PC-3 (cell line): ENCODE measurements at regions of chr3 and their contacts with region 1.

Region 1: GRCh38 chr3:94794288-94794941 is 731.6 kb downstream of the NSUN3 start:
- DNase-seq: peak; percentile 16
- ATAC-seq: no peak
- H3K4me3 ChIP-seq: no peak overlapping the region
- H3K27ac ChIP-seq: no peak overlapping the region
- H3K4me1 ChIP-seq: peaks cover 5% of the 10 kb centered on the region
- H3K27me3 ChIP-seq: no peaks in the 10 kb centered on the region
- CTCF ChIP-seq: no peak

Region 2: DNA sequence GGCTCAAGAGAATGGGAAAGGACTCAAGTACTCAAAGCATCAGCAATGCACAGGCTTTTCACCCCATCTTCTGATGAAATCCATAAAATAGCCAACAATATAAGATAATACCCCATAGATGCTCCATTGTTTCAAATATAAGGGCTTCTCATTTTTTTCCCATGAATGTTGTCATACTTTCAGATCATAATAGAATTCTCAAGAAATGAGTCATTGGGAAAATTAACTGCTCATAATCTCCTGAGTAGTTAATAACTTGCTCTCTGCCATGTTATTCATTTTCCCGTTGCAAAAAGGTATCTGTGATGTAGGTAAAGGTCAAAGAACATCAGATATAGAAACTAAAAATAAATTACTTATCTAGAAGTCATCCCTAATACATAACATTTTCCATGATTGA is 609.6 kb before region 1 on chr3:
- CTCF ChIA-PET with region 1: no interaction called
- POLR2A ChIA-PET with region 1: no interaction called
- intact Hi-C with region 1: no loop called
- DNase-seq: peak; percentile 71
- ATAC-seq: peak; percentile 44
- H3K4me3 ChIP-seq: no peak overlapping the region
- H3K27ac ChIP-seq: peak overlapping the region; percentile 40
- H3K4me1 ChIP-seq: peaks cover 21% of the 10 kb centered on the region
- H3K27me3 ChIP-seq: no peaks in the 10 kb centered on the region
- CTCF ChIP-seq: no peak

Region 3: GRCh38 chr3:94345101-94345500 is 449.3 kb before region 1 on chr3:
- CTCF ChIA-PET with region 1: no interaction called
- POLR2A ChIA-PET with region 1: no interaction called
- intact Hi-C with region 1: loop called (anchors 2 kb)
- DNase-seq: no peak
- ATAC-seq: no peak
- H3K4me3 ChIP-seq: no peak overlapping the region
- H3K27ac ChIP-seq: no peak overlapping the region
- H3K4me1 ChIP-seq: no peaks in the 10 kb centered on the region
- H3K27me3 ChIP-seq: no peaks in the 10 kb centered on the region
- CTCF ChIP-seq: no peak

Region 4: DNA sequence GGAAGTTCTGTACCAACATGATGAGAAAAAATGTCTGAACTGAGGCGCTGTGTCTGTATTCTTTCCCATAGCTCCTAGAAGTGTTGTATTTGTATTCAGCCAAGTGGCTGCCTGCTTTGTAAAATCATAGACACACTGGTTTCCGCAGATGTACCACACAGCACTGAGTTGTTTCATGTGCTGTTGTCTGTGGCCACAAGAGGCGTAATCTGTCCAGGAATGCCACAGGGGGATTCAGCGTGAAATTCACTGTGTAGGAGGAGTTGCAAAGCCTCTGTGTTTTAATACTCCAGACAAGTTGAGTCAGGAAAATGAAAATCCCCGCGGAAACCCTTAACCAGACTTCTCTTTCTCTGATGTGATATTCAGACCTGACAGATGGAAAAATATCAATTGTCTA is 269.4 kb before region 1 on chr3:
- CTCF ChIA-PET with region 1: no interaction called
- POLR2A ChIA-PET with region 1: no interaction called
- intact Hi-C with region 1: loop called (anchors 10 kb)
- DNase-seq: peak; percentile 51
- ATAC-seq: peak; percentile 95
- H3K4me3 ChIP-seq: no peak overlapping the region
- H3K27ac ChIP-seq: no peak overlapping the region
- H3K4me1 ChIP-seq: no peaks in the 10 kb centered on the region
- H3K27me3 ChIP-seq: no peaks in the 10 kb centered on the region
- CTCF ChIP-seq: peak; percentile 73

Region 5: DNA sequence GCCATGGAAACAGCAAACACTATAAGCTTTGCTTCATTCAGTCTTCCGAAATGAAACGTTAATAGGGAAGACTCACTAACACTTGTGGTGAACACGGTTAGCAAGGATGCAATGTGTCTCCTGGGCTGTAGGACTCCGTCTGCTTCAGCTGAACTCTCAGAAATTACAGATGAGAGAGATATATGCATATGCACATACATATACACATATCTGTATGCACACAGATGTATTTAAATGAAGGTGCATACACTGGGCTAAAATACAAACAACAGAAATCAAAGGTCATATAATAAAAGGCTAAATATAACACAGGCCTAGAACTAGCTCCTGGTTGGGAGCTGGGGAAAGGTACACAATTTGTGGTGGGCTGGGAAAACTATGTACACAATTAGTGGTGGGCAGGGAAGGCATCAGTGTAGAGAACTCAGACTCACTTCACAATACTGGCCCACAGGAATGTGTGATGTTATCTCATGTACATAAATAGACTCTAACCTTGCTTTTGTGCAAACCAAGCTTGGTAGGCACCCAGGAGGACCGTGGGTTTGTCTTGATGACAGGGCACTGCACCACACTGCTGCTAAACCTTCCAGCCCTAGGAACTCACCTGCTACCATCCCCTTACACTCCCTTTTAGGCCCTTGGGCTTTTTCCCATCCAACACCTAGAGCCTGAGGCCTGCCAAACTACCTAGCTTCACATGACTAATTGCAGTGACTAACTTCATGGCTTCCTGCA is 141.5 kb after region 1 on chr3:
- CTCF ChIA-PET with region 1: no interaction called
- POLR2A ChIA-PET with region 1: no interaction called
- intact Hi-C with region 1: loop called (anchors 10 kb)
- DNase-seq: peak; percentile 69
- ATAC-seq: peak; percentile 88
- H3K4me3 ChIP-seq: no peak overlapping the region
- H3K27ac ChIP-seq: peak overlapping the region; percentile 57
- H3K4me1 ChIP-seq: 0 out of 2 replicates have a peak, but pooled peaks cover 6% of the 10 kb centered on the region
- H3K27me3 ChIP-seq: no peaks in the 10 kb centered on the region
- CTCF ChIP-seq: no peak

Region 6: DNA sequence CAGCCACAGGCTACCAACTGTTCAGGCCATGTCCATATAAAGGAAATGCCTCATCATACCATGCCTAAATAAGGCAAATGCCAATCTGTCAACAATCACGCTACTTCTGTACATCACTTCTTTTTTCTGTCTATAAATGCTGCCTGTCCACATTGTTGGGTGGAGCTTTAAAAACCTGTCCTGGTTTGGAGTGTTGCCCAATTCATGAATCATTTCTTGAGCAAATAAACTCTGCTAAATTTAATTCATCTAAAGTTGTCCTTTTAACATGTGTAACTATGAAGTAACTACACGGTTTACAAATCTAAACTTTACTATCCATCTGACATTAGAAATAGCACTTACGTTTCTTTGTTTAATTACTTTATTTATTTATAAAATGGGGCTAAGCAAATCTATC is 360.4 kb after region 1 on chr3:
- CTCF ChIA-PET with region 1: no interaction called
- POLR2A ChIA-PET with region 1: no interaction called
- intact Hi-C with region 1: loop called (anchors 10 kb)
- DNase-seq: peak; percentile 98
- ATAC-seq: peak; percentile 99
- H3K4me3 ChIP-seq: no peak overlapping the region
- H3K27ac ChIP-seq: peak overlapping the region; percentile 34; the same call in 1 of the 2 replicates
- H3K4me1 ChIP-seq: peaks cover 14% of the 10 kb centered on the region
- H3K27me3 ChIP-seq: no peaks in the 10 kb centered on the region
- CTCF ChIP-seq: no peak